ENCODE measurements at regions of chr12 and their contacts with region 1.

Region 1: DNA sequence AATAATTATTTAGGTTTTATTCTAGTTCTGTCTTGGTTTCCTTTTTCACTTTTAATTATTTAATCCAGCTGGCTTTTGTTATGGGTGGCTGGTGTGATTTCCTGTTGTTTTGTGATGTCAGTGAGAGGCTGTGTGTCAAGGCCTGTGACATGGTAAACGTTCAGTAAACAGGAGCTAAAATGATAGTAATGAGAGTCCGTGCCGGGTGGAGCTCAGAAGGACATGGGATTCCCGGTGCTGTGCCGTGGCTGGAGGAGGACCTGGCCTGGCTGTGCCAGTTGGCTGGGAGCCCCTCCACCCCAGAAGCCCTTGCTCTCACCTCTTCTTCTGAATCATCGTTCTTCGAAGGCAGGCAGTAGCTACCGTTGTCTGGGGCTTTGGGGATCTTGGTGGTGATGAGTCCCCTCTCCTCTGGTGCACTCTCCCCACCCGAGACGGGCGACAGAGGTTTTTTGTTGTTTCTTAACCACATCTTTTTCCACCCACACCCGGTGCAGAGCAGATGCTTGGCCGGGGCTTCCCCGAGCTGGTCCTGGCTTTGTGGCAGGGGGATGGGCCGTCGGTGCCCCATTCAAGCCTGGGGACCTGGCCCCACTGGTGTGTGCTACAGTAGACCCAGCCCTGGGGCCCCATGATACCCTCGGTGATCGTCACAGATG is 29.1 kb downstream of the SH2B3 start:
- DNase-seq: peak; percentile 59 to 92 (median 88)
- ATAC-seq: peak; percentile 79 to 81 (median 80)
- H3K4me3 ChIP-seq: peak overlapping the region; percentile 42 to 49
- H3K4me3 Mint-ChIP-seq: peak overlapping the region; percentile 79 to 90 (median 82)
- H3K27ac ChIP-seq: peak overlapping the region; percentile 100
- H3K27ac Mint-ChIP-seq: peak overlapping the region; percentile 96 to 99
- H3K4me1 ChIP-seq: peaks cover 60 to 99% of the 10 kb centered on the region in 2 experiments
- H3K4me1 Mint-ChIP-seq: peaks cover 91 to 97% (median 95%) of the 10 kb centered on the region in 3 donors
- H3K27me3 ChIP-seq: no peaks in the 10 kb centered on the region
- H3K27me3 Mint-ChIP-seq: no peaks in the 10 kb centered on the region

Region 2: DNA sequence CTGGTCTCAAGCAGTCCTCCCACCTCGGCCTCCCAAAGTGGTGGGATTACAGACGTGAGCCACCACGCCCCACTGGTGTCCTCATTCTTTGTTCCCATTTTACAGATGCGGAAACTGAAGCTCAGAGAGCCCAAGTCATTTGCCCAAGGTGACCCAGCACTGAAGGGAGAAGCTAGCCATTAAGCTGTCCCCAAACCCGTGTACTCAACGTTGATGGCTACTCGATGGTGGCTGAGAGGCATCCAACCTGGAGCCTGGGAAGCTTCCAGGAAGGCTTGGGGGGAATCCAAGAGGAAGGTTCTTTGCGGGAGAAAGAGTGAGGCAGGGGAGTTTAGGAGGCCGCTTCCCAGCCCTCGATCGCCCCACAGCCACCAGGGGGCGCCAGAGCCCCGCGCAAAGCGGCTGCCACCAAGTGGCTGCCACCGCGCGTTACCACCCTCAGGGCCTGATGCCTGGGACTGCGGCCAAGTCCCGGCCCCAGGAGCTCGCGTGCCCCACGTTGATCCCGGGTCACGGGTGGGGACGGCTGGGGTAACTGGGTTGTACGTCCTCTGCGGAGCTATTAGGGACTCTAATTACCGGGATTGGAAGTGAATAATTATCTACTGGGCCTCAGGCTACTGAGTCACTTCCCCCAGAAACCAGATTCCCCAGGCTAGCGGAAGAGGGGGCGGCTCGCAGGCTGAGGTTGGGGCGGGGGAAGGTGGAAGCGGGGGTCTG is 37.9 kb before region 1 on chr12:
- CTCF ChIA-PET with region 1: interaction called, 5 to 16 read pairs
- POLR2A ChIA-PET with region 1: no interaction called
- DNase-seq: peak; percentile 62 to 93 (median 83)
- ATAC-seq: peak; percentile 92 to 98 (median 94)
- H3K4me3 ChIP-seq: peak overlapping the region in 1 of 2 donors; percentile 26
- H3K4me3 Mint-ChIP-seq: peak overlapping the region; percentile 44 to 66 (median 65)
- H3K27ac ChIP-seq: no peak overlapping the region
- H3K27ac Mint-ChIP-seq: peak overlapping the region in 1 of 2 donors; percentile 52
- H3K4me1 ChIP-seq: peaks cover 0 to 9% of the 10 kb centered on the region in 2 experiments
- H3K4me1 Mint-ChIP-seq: peaks cover 7 to 17% (median 13%) of the 10 kb centered on the region in 3 donors
- H3K27me3 ChIP-seq: peaks cover 0 to 3% of the 10 kb centered on the region in 2 experiments
- H3K27me3 Mint-ChIP-seq: no peaks in the 10 kb centered on the region

Region 3: DNA sequence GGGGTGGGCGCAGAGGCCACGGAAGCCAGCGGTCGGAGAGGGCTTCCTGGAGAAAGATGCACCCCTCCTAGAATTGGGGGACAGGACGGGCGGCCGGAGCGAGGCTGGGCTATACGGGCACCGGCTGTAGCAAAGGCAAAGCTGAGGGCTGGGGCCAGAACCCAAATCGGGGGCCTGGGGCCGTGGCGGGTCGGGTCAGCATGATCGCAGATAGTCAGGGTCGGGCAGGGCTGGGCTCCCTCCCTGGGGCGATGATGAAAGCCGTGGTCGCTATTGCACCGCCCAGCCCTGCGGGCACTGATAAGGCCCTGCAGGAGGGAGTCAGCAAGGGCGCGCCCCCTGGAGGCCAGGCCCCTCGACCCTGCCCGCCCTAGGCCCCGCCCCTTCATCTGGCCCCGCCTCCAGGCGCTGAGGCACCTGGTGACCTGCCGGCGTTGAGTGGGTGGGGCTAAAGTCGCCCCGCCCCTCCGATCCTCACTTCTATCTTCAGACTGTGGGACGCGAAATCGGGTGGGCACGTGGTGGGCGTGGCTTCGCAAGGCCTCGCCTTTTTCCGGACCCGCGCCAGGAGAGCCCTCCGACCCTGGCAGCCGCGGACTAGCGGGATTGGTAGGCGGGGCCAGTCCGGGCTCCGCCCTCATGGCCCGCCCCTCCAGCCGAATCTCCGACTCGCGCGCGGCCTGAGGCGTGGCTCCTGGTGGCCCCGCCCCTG is 29.5 kb before region 1 on chr12:
- CTCF ChIA-PET with region 1: interaction called, 4 to 22 read pairs
- POLR2A ChIA-PET with region 1: interaction called, 3 to 9 read pairs
- DNase-seq: peak; percentile 94 to 100 (median 98)
- ATAC-seq: peak; percentile 77 to 83 (median 78)
- H3K4me3 ChIP-seq: peak overlapping the region; percentile 26 to 65
- H3K4me3 Mint-ChIP-seq: peak overlapping the region; percentile 81 to 85 (median 85)
- H3K27ac ChIP-seq: peak overlapping the region; percentile 70
- H3K27ac Mint-ChIP-seq: peak overlapping the region; percentile 90 to 92
- H3K4me1 ChIP-seq: peaks cover 30 to 68% of the 10 kb centered on the region in 2 experiments
- H3K4me1 Mint-ChIP-seq: peaks cover 58 to 63% (median 59%) of the 10 kb centered on the region in 3 donors
- H3K27me3 ChIP-seq: no peaks in the 10 kb centered on the region
- H3K27me3 Mint-ChIP-seq: no peaks in the 10 kb centered on the region

Region 4: DNA sequence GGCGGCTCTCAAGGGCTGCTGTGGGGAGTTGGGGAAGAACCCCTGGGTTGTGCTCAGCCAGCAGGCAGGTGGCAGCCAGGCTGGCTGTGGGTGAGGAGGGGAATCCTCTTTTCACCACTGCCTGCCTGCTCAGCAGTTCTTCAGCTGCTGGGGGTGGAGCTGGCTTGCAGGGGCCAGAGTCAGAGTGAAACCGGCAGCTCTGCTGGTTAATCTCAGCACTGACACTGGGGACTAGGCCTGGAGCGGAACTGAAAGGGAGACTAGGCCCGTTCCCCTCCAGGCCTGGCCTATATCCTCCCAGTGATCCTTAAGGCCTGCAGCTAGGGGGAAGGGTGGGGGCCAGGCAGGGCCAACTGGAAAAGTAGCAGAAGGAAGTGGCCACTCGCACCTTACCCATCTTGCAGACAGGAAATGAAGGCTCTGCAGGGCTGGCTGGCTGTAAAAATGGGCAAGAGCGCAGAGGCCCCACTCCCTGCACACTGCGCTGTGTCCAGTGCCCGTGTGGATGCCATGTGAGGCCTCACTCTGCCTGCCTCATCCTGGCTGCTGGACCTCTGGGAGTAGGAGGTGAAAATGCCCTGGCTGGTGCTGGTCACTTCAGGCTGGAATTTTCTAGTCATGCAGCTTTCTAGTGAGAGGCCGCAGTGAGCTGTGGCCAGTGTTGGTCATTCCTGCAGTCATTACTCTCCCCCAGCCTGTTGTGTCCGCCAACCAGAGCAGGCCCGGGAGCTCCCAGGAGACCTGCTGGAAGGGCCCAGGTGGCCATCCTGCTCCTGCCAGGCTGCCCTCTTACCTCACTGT is 10.3 kb after region 1 on chr12:
- CTCF ChIA-PET with region 1: interaction called, 3 to 45 read pairs
- POLR2A ChIA-PET with region 1: interaction called, 6 to 22 read pairs
- DNase-seq: peak in 34 of 35 experiments; percentile 60 to 92 (median 84)
- ATAC-seq: peak; percentile 88 to 97 (median 93)
- H3K4me3 ChIP-seq: peak overlapping the region in 1 of 2 donors; percentile 13
- H3K4me3 Mint-ChIP-seq: peak overlapping the region; percentile 31 to 64 (median 49)
- H3K27ac ChIP-seq: peak overlapping the region; percentile 89
- H3K27ac Mint-ChIP-seq: peak overlapping the region; percentile 89 to 96
- H3K4me1 ChIP-seq: peaks cover 16 to 69% of the 10 kb centered on the region in 2 experiments
- H3K4me1 Mint-ChIP-seq: peaks cover 65 to 95% (median 78%) of the 10 kb centered on the region in 3 donors
- H3K27me3 ChIP-seq: no peaks in the 10 kb centered on the region
- H3K27me3 Mint-ChIP-seq: no peaks in the 10 kb centered on the region

Measured in T-cell (primary cell).